Activated naive CD4-positive, alpha-beta T cell treated with anti-CD3 and anti-CD28 coated beads for 36 hours (primary cell): ENCODE measurements at regions of chr17 and their contacts with region 1.

Region 1: DNA sequence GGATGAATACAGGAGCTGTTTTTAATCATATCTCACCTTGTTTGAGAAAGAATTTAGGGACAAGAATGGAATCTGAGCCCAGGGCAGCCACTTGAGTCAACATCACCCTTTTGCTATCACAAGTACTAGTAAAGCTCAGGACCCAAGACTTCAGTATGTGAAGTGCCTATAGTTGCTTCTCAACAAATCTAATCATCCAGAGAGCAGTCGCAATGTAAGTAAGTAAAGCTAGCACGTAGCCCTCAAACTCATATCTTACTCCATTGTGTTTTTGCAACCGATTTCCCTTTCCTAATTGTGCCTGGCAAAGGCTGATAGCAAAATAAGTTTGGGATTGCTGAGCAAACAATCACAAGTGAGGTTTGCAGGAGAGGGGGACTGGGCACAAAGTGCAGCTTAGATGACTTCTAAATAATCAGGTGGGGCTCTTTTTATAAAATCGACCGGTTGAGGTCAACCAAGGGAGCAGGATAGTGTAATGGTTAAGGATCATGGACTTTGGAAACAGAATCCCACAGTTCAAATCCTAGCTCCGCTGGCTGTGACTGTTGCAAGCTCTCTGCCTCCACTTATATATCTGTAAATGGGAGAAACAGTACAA is 13.0 kb downstream of the TOB1 start:
- DNase-seq: no peak
- H3K4me3 Mint-ChIP-seq: no peak overlapping the region
- H3K27ac Mint-ChIP-seq: no peak overlapping the region
- H3K4me1 Mint-ChIP-seq: peaks cover 14% of the 10 kb centered on the region
- H3K27me3 Mint-ChIP-seq: no peaks in the 10 kb centered on the region

Region 2: DNA sequence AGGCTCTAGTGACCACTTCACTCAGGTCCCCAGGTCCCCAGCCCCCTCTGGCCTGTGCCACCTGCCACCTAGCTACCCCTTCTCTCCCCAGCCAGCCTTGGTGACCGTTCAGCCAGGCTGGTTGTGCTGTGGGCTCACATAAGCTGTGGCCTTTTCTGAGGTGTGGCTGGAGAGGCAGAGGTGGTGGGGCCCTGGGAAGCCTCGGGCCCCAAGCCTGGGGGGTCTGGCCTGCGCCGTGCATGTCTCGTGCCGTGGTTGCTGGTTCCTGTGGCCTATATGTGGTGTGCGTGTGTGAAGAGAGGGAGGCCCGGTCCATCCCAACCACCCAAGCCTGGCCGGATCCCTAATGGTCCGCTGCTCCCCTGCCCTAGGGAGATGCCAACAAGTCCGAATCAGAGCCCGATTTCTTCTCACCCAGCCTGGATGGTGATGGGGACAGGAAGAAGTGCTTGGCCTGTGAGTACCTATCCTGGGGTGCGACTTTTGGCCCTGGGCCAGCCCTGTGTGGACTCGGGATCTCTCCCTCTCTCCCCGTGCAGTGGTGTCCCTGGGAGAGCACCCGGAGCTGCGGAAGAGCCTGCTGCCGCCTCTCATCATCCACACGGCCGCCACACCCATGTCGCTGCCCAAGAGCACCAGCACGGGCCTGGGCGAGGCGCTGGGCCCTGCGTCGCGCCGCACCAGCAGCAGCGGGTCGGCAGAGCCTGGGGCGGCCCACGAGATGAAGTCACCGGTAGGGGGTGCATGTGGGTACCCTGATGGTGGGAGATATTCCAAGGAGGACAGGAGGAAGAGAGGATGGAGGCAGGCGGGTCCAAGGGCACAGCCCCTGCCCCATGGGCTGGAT is 256.7 kb before region 1 on chr17:
- CTCF ChIA-PET with region 1: no interaction called
- intact Hi-C with region 1: no loop called
- DNase-seq: no peak
- H3K4me3 Mint-ChIP-seq: no peak overlapping the region
- H3K27ac Mint-ChIP-seq: no peak overlapping the region
- H3K4me1 Mint-ChIP-seq: no peaks in the 10 kb centered on the region
- H3K27me3 Mint-ChIP-seq: no peaks in the 10 kb centered on the region

Region 3: DNA sequence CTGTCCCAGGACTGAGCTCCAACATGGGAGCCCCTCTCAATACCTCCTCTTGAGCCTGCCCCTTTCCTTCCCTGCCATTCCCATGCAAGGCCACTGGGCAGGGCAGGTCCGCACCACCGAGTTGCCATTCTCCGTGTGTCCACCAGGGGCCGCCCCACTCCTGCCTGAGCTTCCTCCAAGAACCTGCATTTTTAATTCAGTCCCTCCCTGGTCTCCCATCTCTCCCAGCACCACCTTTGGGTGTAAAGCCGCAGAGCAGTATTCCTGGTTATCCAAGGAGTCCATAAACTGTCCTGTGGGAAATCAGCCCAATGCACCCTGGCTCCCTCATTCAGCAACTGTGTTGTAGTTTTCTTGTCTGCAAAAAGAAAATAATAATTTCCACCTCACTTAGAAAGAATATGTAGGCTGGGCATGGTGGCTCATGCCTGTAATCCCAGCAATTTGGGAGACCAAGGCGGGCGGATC is 69.9 kb before region 1 on chr17:
- CTCF ChIA-PET with region 1: interaction called, 27 read pairs
- intact Hi-C with region 1: no loop called
- DNase-seq: peak; percentile 90
- H3K4me3 Mint-ChIP-seq: no peak overlapping the region
- H3K27ac Mint-ChIP-seq: no peak overlapping the region
- H3K4me1 Mint-ChIP-seq: peaks cover 21% of the 10 kb centered on the region
- H3K27me3 Mint-ChIP-seq: peaks cover 4% of the 10 kb centered on the region

Region 4: DNA sequence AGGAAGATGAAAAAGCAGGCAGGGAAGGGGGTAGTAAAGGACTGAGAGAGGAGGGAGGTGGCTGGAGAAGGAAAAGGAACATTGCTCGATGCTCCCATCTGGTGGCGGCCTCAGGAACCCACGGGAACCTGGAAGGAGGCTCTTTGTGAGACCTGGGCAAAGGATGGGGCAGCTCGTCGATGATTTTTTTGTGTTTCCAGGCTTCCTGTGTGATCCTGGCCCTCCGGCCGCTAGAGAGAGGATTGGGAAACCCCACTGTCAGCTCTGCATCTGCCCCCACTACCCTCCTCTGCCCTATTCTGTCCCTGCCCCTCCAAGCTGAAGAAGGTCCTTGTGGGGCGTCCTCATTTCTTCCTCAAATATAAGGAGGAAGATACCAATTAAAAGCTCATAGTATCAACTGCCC is 11.2 kb before region 1 on chr17:
- CTCF ChIA-PET with region 1: interaction called, 17 read pairs
- intact Hi-C with region 1: no loop called
- DNase-seq: peak; percentile 73
- H3K4me3 Mint-ChIP-seq: no peak overlapping the region
- H3K27ac Mint-ChIP-seq: no peak overlapping the region
- H3K4me1 Mint-ChIP-seq: peaks cover 3% of the 10 kb centered on the region
- H3K27me3 Mint-ChIP-seq: no peaks in the 10 kb centered on the region

Region 5: GRCh38 chr17:50949989-50950881 is 97.1 kb after region 1 on chr17:
- CTCF ChIA-PET with region 1: interaction called, 83 read pairs
- intact Hi-C with region 1: loop called (anchors 1 kb)
- DNase-seq: peak; percentile 80
- H3K4me3 Mint-ChIP-seq: no peak overlapping the region
- H3K27ac Mint-ChIP-seq: peak overlapping the region; percentile 53
- H3K4me1 Mint-ChIP-seq: peaks cover 26% of the 10 kb centered on the region
- H3K27me3 Mint-ChIP-seq: no peaks in the 10 kb centered on the region

Region 6: DNA sequence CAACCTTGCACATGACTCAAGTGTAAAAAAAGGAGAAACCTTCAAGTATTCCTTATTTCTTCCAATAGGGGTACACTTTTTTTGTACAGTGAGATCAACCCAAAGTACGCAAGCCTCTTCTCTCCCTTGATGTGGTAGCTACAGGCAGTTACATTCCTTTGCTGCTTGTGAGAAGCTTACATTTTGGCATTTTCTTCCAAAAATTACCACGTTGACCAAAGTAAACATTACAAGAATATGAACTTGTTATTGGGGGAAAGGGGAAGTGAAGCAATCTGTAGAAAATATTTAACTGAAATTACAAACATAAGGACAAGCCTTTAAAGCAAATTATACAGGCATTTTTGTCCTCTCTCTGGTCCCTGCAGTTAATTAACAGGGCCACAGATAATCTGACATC is 110.0 kb after region 1 on chr17:
- CTCF ChIA-PET with region 1: interaction called, 83 read pairs
- intact Hi-C with region 1: no loop called
- DNase-seq: no peak
- H3K4me3 Mint-ChIP-seq: no peak overlapping the region
- H3K27ac Mint-ChIP-seq: no peak overlapping the region
- H3K4me1 Mint-ChIP-seq: peaks cover 9% of the 10 kb centered on the region
- H3K27me3 Mint-ChIP-seq: no peaks in the 10 kb centered on the region